Activated B cell treated with CpG ODN at 0.5 μM for 24 hours (primary cell): ENCODE measurements at regions of chr15 and their contacts with region 1.

Region 1: GRCh38 chr15:77543159-77543882 is 89.4 kb downstream of the LINGO1 start:
- DNase-seq: peak; percentile 78
- ATAC-seq: peak; percentile 89
- H3K4me3 Mint-ChIP-seq: peak overlapping the region; percentile 83
- H3K27ac Mint-ChIP-seq: peak overlapping the region; percentile 24
- H3K4me1 Mint-ChIP-seq: peaks cover 43% of the 10 kb centered on the region
- H3K27me3 Mint-ChIP-seq: peaks cover 3% of the 10 kb centered on the region
- CTCF ChIP-seq: peak; percentile 51

Region 2: GRCh38 chr15:76973362-76973743 is 570.0 kb before region 1 on chr15:
- CTCF ChIA-PET with region 1: interaction called, 6 read pairs
- POLR2A ChIA-PET with region 1: no interaction called
- intact Hi-C with region 1: loop called (anchors 2 kb)
- DNase-seq: no peak
- ATAC-seq: no peak
- H3K4me3 Mint-ChIP-seq: no peak overlapping the region
- H3K27ac Mint-ChIP-seq: no peak overlapping the region
- H3K4me1 Mint-ChIP-seq: peaks cover 6% of the 10 kb centered on the region
- H3K27me3 Mint-ChIP-seq: no peaks in the 10 kb centered on the region
- CTCF ChIP-seq: no peak

Region 3: DNA sequence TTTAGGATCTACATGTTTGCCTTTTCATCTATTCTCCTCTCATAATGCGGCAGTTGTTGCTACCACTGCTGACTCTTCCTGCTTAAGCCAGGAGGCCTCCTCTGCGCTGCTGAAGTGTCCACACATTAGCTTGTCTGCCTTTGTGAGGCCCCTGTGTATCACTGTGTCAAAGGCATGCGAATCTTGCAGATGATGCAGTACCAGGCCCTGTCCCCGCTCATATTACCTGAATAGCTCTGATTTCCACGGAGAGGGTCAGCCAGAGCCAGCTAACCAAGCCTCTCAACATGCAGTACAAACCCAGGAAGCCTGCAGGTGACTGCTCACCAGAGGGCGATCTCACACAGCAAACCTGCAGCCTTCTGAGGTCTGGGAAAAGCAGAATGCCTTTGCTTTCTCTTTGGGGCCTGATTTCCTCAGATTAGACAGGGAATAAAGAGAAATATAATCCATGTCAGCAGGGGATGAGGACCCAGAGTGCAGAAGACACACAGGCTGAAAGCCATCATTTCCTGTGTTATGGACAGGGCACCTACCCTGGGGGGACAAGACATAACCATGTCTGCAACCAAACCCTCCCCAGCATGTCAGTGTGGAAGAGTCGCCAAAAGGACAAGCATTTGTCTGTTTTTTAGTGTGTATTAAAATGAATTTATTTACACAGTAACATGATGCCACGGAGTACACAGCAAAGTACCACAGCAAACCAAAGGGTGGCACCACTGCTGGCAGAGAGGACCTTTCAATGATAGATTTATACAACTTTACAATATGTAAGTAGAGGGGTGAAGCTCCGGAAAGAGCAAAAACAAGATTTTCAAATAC is 435.6 kb before region 1 on chr15:
- CTCF ChIA-PET with region 1: interaction called, 59 read pairs
- POLR2A ChIA-PET with region 1: no interaction called
- intact Hi-C with region 1: loop called (anchors 1 kb)
- DNase-seq: no peak
- ATAC-seq: peak; percentile 60
- H3K4me3 Mint-ChIP-seq: no peak overlapping the region
- H3K27ac Mint-ChIP-seq: no peak overlapping the region
- H3K4me1 Mint-ChIP-seq: peaks cover 9% of the 10 kb centered on the region
- H3K27me3 Mint-ChIP-seq: no peaks in the 10 kb centered on the region
- CTCF ChIP-seq: no peak

Region 4: DNA sequence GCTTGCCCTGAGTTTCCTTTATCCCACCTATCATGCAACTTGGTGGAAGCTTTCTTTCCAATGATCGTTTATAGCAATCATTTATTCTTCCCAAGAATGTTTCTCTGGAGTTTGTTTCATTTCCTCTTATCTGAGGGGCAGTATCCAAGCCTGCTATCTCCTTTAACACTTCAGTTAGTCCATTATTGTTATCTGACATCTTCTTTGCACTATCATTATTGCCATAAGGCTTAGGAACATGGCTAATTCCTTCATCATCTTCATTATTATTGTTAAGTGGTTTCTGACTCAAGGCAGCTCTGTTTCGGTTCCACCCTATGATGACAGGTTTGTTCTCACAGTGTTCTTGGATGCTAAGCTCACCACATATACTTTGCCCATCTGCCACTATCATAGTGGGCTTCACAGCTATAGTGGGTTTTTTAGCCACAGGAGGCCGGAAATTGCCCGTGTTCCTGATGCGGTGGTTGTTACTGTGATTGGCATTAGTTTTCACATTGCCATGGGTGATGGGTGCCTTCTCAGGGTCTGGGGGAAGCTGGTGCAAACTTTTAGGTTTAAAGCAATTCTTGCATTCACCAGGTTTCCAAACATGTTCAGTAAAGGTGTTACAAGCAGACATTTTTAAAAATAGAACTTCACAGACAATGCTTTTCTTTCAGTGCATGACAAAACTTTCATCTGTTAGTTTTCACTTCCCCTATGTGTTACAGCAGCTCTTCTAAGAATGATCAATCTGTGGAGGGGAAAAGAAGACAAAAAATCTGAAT is 361.8 kb before region 1 on chr15:
- CTCF ChIA-PET with region 1: interaction called, 147 read pairs
- POLR2A ChIA-PET with region 1: interaction called, 16 read pairs
- intact Hi-C with region 1: loop called (anchors 1 kb)
- DNase-seq: peak; percentile 37
- ATAC-seq: peak; percentile 75
- H3K4me3 Mint-ChIP-seq: peak overlapping the region; percentile 78
- H3K27ac Mint-ChIP-seq: peak overlapping the region; percentile 94
- H3K4me1 Mint-ChIP-seq: peaks cover 82% of the 10 kb centered on the region
- H3K27me3 Mint-ChIP-seq: no peaks in the 10 kb centered on the region
- CTCF ChIP-seq: no peak

Region 5: DNA sequence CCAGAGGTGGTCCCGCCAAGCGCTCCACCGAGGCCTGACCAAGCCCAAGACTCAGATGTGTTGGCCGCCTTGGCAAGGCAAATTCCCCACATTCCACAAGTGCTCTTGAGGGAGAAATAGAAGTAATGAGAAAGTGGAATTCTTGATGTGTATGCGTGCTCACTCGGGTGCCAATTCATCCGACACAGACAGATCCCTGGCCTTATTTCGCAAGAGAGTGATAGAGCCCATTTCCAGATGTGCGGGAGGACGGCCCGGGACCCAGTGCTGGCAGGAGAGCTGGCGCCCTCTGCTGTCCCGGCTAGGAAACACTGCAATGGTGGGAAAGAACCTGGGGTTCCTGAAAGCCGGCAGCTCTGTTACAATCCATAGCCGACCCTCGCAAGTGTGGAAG is 46.6 kb before region 1 on chr15:
- CTCF ChIA-PET with region 1: interaction called, 80 read pairs
- POLR2A ChIA-PET with region 1: interaction called, 5 read pairs
- intact Hi-C with region 1: loop called (anchors 1 kb)
- DNase-seq: peak; percentile 67
- ATAC-seq: peak; percentile 75
- H3K4me3 Mint-ChIP-seq: no peak overlapping the region
- H3K27ac Mint-ChIP-seq: no peak overlapping the region
- H3K4me1 Mint-ChIP-seq: peaks cover 17% of the 10 kb centered on the region
- H3K27me3 Mint-ChIP-seq: no peaks in the 10 kb centered on the region
- CTCF ChIP-seq: peak; percentile 66